K562 (cell line): ENCODE measurements at regions of chr10 and their contacts with region 1.

Region 1: DNA sequence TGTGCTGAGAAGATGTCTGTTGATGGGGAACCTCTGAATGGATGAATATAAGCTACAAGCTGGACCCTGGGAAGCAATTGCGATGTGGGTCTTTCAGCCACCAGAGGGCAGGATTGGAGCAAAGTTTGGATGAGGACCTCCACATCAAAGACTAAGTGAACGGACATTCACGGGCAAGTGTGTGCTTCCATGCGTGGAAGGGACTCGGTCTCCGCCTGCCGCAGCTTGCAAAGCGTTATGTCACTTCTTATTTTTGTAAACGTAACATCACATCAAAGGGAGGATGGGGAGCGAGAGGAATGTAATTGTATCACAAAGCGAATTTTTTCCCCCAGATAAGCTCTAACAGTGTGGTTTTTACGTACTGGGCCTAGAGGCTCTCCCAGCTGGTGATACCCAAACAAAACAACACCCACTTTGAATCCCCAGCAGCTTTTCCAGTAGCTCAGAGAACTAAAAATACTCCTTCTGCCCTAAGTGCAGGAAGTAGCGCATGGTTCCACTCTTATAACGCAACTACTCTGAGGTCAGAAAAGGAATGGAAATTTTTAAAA is 65.0 kb downstream of the VWA2 start:
- DNase-seq: peak; percentile 49 to 62 (median 52)
- ATAC-seq: peak; percentile 89
- H3K4me3 ChIP-seq: no peak overlapping the region
- H3K27ac ChIP-seq: no peak overlapping the region
- H3K4me1 ChIP-seq: no peaks in the 10 kb centered on the region
- H3K27me3 ChIP-seq: peaks cover 0 to 16% of the 10 kb centered on the region in 2 experiments; a peak in 3 of 5 replicates
- CTCF ChIP-seq: peak; percentile 60 to 64 (median 63)
- EP300 ChIP-seq: no peak
- POLR2A ChIP-seq: no peak
- RAD21 ChIP-seq: peak; percentile 74 to 75

Region 2: GRCh38 chr10:113704637-113705343 is 599.3 kb before region 1 on chr10:
- CTCF ChIA-PET with region 1: no interaction called
- POLR2A ChIA-PET with region 1: no interaction called
- in situ Hi-C with region 1: no loop called
- intact Hi-C with region 1: loop called (anchors 10 kb)
- DNase-seq: peak; percentile 13 to 45 (median 14)
- ATAC-seq: peak; percentile 84
- H3K4me3 ChIP-seq: no peak overlapping the region
- H3K27ac ChIP-seq: no peak overlapping the region
- H3K4me1 ChIP-seq: no peaks in the 10 kb centered on the region
- H3K27me3 ChIP-seq: peaks cover 0 to 12% of the 10 kb centered on the region in 2 experiments; a peak in 1 of 5 replicates
- CTCF ChIP-seq: peak; percentile 24 to 53 (median 51); a peak in 4 of 6 replicates
- EP300 ChIP-seq: no peak
- POLR2A ChIP-seq: no peak
- RAD21 ChIP-seq: peak; percentile 53 to 61

Region 3: GRCh38 chr10:113922787-113923570 is 381.1 kb before region 1 on chr10:
- CTCF ChIA-PET with region 1: no interaction called
- POLR2A ChIA-PET with region 1: no interaction called
- in situ Hi-C with region 1: no loop called
- intact Hi-C with region 1: no loop called
- DNase-seq: no peak
- ATAC-seq: no peak
- H3K4me3 ChIP-seq: no peak overlapping the region
- H3K27ac ChIP-seq: no peak overlapping the region
- H3K4me1 ChIP-seq: no peaks in the 10 kb centered on the region
- H3K27me3 ChIP-seq: no peaks in the 10 kb centered on the region
- CTCF ChIP-seq: peak in 1 of 3 experiments; percentile 21; a peak in 2 of 6 replicates
- EP300 ChIP-seq: no peak
- POLR2A ChIP-seq: no peak
- RAD21 ChIP-seq: no peak

Region 4: GRCh38 chr10:114437456-114438292 is 133.6 kb after region 1 on chr10:
- CTCF ChIA-PET with region 1: no interaction called
- POLR2A ChIA-PET with region 1: no interaction called
- in situ Hi-C with region 1: no loop called
- intact Hi-C with region 1: loop called (anchors 2 kb)
- DNase-seq: peak in 3 of 4 experiments; percentile 9 to 32 (median 27)
- ATAC-seq: peak; percentile 41; the same call in 1 of the 3 replicates
- H3K4me3 ChIP-seq: no peak overlapping the region
- H3K27ac ChIP-seq: no peak overlapping the region
- H3K4me1 ChIP-seq: no peaks in the 10 kb centered on the region
- H3K27me3 ChIP-seq: peaks cover 0 to 4% of the 10 kb centered on the region in 2 experiments; a peak in 2 of 5 replicates
- CTCF ChIP-seq: peak in 2 of 3 experiments; percentile 38 to 41; a peak in 3 of 6 replicates
- EP300 ChIP-seq: no peak
- POLR2A ChIP-seq: no peak
- RAD21 ChIP-seq: 0 out of 4 replicates have a peak, but pooled peaks have one; percentile 10 to 16

Region 5: DNA sequence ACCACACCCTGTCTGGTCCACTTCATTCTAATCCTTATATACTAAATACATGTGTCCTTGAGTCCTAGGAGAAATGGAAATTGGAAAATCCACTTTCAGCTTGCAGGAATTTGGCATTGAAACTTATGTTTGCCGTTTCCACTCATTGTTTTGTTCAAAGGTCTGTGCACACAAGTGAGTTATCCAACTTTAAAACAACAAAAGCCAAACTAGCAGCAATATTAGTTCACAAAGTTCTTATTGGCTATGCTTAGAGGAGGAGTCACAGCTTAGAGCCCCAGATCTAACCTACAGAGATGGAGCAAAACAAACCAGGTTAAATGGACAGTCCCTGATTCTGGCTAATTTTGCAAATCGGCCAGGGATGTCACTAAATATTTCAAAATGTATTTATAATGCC is 144.8 kb after region 1 on chr10:
- CTCF ChIA-PET with region 1: no interaction called
- POLR2A ChIA-PET with region 1: no interaction called
- in situ Hi-C with region 1: no loop called
- intact Hi-C with region 1: no loop called
- DNase-seq: no peak
- ATAC-seq: no peak
- H3K4me3 ChIP-seq: no peak overlapping the region
- H3K27ac ChIP-seq: no peak overlapping the region
- H3K4me1 ChIP-seq: no peaks in the 10 kb centered on the region
- H3K27me3 ChIP-seq: no peaks in the 10 kb centered on the region
- CTCF ChIP-seq: no peak
- EP300 ChIP-seq: no peak
- POLR2A ChIP-seq: no peak
- RAD21 ChIP-seq: no peak

Region 6: GRCh38 chr10:114458955-114459354 is 154.9 kb after region 1 on chr10:
- CTCF ChIA-PET with region 1: no interaction called
- POLR2A ChIA-PET with region 1: no interaction called
- in situ Hi-C with region 1: no loop called
- intact Hi-C with region 1: loop called (anchors 2 kb)
- DNase-seq: peak; percentile 12 to 27 (median 22)
- ATAC-seq: peak; percentile 84
- H3K4me3 ChIP-seq: no peak overlapping the region
- H3K27ac ChIP-seq: no peak overlapping the region
- H3K4me1 ChIP-seq: no peaks in the 10 kb centered on the region
- H3K27me3 ChIP-seq: no peaks in the 10 kb centered on the region
- CTCF ChIP-seq: peak; percentile 29 to 44 (median 38); a peak in 5 of 6 replicates
- EP300 ChIP-seq: no peak
- POLR2A ChIP-seq: no peak
- RAD21 ChIP-seq: peak; percentile 45 to 54

Region 7: GRCh38 chr10:114520453-114520852 is 216.4 kb after region 1 on chr10:
- CTCF ChIA-PET with region 1: no interaction called
- POLR2A ChIA-PET with region 1: no interaction called
- in situ Hi-C with region 1: no loop called
- intact Hi-C with region 1: no loop called
- DNase-seq: no peak
- ATAC-seq: no peak
- H3K4me3 ChIP-seq: no peak overlapping the region
- H3K27ac ChIP-seq: no peak overlapping the region
- H3K4me1 ChIP-seq: no peaks in the 10 kb centered on the region
- H3K27me3 ChIP-seq: no peaks in the 10 kb centered on the region; a peak in 1 of 5 replicates
- CTCF ChIP-seq: no peak
- EP300 ChIP-seq: no peak
- POLR2A ChIP-seq: no peak
- RAD21 ChIP-seq: no peak

Region 8: DNA sequence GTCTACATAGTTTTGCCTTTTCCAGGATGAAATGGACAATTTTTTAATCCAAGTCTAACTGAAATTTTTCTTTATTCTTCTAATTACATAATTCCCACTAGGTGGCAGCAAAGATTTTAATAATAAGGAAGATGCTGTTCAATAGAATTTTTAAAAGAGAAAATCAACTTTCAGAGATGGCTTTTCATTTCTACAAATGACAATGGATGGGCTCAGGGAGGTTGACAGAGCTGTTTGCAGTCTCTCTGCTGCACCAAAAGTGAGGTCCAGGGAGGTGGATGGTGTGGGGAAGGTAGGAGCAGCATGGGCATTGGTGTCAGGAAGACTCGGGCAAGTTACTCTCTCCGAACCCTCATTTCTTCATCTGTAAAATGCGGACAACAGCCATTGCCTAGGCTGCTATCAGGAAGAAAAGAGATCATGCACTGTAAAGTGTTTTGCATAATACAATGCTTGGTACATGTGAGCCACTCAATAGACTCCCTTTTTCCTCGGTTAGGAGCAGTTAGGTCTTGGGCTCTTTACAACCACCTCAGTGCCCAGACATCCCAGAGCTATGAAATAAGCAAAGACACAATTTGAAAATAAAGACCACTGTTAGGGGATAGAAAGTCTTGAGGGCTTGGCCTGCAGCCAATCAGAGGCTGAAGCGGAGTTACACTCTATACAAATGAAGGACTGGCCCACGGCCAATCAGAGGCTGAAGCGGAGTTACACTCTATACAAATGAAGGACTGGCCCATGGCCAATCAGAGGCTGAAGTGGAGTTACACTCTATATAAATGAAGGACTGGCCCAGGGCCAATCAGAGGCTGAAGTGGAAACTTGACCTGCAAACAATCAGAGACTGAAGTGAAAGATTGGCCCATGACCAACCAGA is 246.9 kb after region 1 on chr10:
- CTCF ChIA-PET with region 1: no interaction called
- POLR2A ChIA-PET with region 1: no interaction called
- in situ Hi-C with region 1: no loop called
- intact Hi-C with region 1: loop called (anchors 1 kb)
- DNase-seq: peak in 1 of 4 experiments; percentile 5
- ATAC-seq: no peak
- H3K4me3 ChIP-seq: no peak overlapping the region
- H3K27ac ChIP-seq: no peak overlapping the region
- H3K4me1 ChIP-seq: no peaks in the 10 kb centered on the region
- H3K27me3 ChIP-seq: no peaks in the 10 kb centered on the region
- CTCF ChIP-seq: peak in 2 of 3 experiments; percentile 29 to 39; a peak in 2 of 6 replicates
- EP300 ChIP-seq: no peak
- POLR2A ChIP-seq: no peak
- RAD21 ChIP-seq: peak; percentile 37 to 54

Region 9: DNA sequence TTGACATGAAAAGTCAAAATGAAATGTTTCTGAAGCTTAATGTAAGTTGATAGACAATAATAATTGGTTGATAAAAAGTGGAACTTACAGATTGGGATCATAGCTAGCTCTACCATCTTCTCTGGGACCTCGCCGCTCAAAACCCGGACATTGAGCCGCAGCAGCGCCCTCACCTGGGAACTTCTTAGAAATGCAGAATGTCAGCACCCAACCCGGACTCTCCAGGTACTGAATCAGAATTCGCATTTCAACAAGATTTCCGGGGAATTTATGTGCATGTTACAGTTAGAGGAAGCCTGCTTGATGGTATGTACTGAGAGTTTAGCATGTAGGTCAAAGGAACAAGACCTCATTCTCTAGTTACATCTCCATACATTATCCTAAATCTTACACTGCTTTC is 390.7 kb after region 1 on chr10:
- CTCF ChIA-PET with region 1: no interaction called
- POLR2A ChIA-PET with region 1: no interaction called
- in situ Hi-C with region 1: no loop called
- intact Hi-C with region 1: loop called (anchors 5 kb)
- DNase-seq: peak; percentile 29 to 38 (median 36)
- ATAC-seq: peak; percentile 64; the same call in 2 of the 3 replicates
- H3K4me3 ChIP-seq: no peak overlapping the region
- H3K27ac ChIP-seq: no peak overlapping the region
- H3K4me1 ChIP-seq: no peaks in the 10 kb centered on the region
- H3K27me3 ChIP-seq: no peaks in the 10 kb centered on the region; a peak in 1 of 5 replicates
- CTCF ChIP-seq: peak; percentile 49 to 62 (median 52)
- EP300 ChIP-seq: no peak
- POLR2A ChIP-seq: no peak
- RAD21 ChIP-seq: peak in 1 of 2 experiments; percentile 53; a peak in 2 of 4 replicates